ENCODE measurements at regions of chr1 and their contacts with region 1.

Region 1: DNA sequence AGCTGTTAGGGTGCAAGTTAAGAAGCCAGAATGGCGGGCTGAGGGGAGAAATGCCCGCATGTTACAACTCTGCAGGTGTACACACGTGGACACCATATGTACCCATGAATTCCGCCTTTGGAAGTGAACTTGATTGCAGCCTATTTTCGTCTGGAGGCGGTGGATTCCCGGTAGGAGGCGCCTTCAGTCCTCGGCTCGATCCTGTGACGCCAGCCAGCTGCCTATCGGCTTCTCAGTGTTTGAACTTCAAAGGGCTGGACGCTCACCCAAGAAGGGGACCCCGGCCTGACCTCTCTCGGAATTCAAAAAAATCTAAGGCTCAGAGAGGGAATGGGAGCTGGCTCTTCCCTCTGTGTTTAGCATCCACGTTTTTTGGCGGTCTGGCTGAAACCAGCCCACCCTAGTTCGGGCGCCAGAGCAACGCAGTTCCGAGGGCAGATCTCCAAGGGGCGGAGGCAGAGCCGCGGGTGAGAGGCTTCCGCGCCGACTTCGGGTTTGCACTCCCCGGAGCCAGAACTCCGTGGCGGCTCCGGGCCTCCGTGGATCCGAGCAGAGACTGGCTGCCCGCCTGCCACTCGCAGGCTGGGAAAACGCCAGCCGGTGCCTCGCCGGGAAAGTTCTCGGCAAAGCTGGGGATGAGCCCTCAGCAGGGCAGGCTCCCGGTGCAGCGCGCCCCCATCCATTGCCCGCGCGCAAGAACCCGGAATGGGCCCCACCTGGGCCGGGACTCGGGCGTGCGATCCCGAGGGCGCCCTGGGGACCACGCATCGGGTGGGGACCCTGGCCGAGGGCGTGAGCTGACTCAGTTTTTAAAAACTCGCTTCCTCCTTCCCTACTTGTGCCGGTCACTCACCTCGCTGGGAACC is 996 bp upstream of the TMEM51 start:
- H3K4me3 Mint-ChIP-seq: peak overlapping the region; percentile 96
- H3K27ac Mint-ChIP-seq: peak overlapping the region; percentile 94
- H3K4me1 Mint-ChIP-seq: peaks cover 68% of the 10 kb centered on the region
- H3K27me3 Mint-ChIP-seq: peaks cover 13% of the 10 kb centered on the region

Region 2: DNA sequence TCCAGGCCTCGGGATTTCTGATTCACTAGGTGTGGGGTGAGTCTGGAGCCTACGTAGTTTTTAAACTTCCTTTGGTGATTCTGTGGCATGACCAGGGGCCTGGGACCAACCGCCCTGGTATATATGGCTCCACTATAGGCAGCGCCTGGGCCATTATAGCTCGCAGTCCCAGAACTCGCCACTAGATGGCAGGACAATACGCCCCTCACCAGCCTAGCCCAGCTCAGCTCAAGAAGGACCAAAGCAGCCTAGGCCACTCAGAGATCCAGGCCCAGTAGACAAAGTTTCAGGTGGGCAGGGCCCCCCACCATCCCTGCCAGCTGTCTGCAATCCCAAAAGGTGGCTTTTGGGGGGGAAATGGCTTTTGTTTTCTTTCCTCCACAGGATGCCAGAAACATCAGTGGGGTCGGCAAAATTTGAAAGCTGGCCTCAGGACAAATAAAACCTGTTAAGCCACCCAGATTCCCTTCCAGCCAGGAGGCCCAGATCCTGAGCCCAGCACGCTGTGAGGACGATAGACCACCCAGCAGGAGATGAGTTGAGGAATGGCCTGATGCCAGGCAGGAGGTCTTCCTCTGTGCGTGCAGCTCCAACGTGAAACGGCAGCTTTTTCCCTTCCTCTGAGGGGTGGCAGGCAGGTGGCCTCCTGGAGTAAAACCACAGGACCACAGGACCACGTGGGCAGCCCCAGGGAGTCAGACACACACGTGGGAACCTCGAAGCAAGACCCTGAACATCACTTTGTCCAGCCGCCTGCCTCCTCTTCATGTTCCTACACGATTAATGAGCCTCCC is 23.8 kb before region 1 on chr1:
- intact Hi-C with region 1: loop called (anchors 2 kb)
- H3K4me3 Mint-ChIP-seq: no peak overlapping the region
- H3K27ac Mint-ChIP-seq: peak overlapping the region; percentile 26
- H3K4me1 Mint-ChIP-seq: peaks cover 15% of the 10 kb centered on the region
- H3K27me3 Mint-ChIP-seq: peaks cover 10% of the 10 kb centered on the region

Region 3: GRCh38 chr1:15168479-15168878 is 15.9 kb after region 1 on chr1:
- intact Hi-C with region 1: loop called (anchors 2 kb)
- H3K4me3 Mint-ChIP-seq: no peak overlapping the region
- H3K27ac Mint-ChIP-seq: peak overlapping the region; percentile 84
- H3K4me1 Mint-ChIP-seq: peaks cover 56% of the 10 kb centered on the region
- H3K27me3 Mint-ChIP-seq: no peaks in the 10 kb centered on the region

Region 4: DNA sequence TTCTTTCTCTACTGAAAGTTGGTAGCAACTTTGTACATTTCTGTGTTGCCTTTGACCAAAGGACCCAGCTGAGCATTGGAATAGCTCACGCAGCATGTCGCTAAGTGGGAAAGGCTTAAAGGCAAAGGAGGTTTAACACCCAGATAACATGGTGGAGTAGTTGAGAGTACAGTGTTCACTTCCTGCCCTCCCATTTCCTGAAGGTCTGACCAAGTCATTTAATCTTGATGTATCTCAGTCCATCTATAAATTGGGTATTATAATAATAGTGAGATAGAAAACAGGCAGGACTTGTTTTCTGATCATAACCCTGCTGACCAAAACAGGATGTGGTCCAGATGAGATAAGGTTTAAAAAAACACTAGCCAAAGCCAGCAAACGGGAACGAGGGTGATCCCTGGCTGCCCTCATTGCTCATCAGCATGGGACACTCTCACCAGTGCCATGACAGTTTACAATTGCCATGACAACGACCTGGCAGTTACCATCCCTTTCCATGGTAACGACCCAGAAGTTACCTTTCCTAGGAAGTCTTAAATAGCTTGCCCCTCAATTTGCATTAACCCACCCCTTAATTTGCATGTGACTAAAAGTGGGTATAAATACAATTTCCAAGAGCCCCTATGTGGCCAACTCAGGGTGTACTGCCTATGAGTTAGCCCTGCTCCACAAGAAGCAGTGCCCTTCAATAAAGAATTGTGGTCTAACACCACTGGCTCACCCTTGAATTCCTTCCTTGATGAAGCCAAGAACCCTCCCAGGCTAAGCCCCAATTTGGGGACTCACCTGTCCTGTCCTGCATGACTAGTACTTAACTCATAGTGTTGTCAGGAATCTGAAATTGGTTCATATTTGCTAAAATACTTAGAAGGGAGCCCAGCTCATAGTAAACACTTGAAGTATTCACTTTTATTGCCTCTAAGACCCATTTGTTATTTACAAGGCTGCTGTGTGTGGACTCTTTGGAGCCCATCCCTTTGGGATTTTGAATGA is 66.0 kb after region 1 on chr1:
- intact Hi-C with region 1: loop called (anchors 10 kb)
- H3K4me3 Mint-ChIP-seq: no peak overlapping the region
- H3K27ac Mint-ChIP-seq: no peak overlapping the region
- H3K4me1 Mint-ChIP-seq: peaks cover 89% of the 10 kb centered on the region
- H3K27me3 Mint-ChIP-seq: no peaks in the 10 kb centered on the region

Region 5: GRCh38 chr1:15272009-15272788 is 119.6 kb after region 1 on chr1:
- intact Hi-C with region 1: loop called (anchors 2 kb)
- H3K4me3 Mint-ChIP-seq: peak overlapping the region; percentile 32
- H3K27ac Mint-ChIP-seq: peak overlapping the region; percentile 22
- H3K4me1 Mint-ChIP-seq: peaks cover 43% of the 10 kb centered on the region
- H3K27me3 Mint-ChIP-seq: no peaks in the 10 kb centered on the region

Region 6: DNA sequence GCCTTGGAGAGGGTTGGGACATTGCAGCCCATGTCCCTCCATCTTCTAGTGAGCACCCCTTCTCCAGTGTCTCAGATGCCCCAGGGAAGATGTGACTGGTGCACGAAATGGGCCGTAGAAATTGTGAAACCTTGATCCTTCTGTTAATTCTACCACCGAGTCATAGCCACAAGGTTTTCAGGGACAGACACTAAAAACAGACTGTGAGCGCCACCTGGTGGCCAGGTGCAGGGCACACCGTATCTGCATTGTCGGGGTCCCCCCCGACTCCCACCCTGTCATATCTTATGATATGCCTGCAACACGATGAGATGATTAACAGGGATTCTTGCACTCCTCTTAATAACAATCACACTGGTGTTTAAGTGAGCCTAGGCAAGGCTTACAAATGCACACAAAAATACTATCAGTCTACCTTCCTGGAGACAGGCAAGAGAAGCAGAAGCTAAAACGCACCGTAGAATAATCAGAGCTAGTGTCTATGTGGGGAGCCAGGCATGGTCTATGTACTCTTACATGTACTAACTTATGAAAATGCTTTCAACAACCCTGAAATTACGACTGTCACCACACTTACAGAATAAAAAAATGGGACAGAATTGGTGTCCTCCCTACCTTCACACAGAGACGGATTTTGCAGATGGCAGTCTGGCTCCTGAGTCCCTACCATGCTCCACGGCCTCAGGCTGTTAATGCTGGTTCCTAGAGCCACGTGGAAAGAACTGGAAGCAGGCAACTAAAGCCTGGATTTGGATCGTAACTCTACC is 152.3 kb after region 1 on chr1:
- intact Hi-C with region 1: loop called (anchors 1 kb)
- H3K4me3 Mint-ChIP-seq: no peak overlapping the region
- H3K27ac Mint-ChIP-seq: no peak overlapping the region
- H3K4me1 Mint-ChIP-seq: peaks cover 16% of the 10 kb centered on the region
- H3K27me3 Mint-ChIP-seq: peaks cover 13% of the 10 kb centered on the region

Region 7: DNA sequence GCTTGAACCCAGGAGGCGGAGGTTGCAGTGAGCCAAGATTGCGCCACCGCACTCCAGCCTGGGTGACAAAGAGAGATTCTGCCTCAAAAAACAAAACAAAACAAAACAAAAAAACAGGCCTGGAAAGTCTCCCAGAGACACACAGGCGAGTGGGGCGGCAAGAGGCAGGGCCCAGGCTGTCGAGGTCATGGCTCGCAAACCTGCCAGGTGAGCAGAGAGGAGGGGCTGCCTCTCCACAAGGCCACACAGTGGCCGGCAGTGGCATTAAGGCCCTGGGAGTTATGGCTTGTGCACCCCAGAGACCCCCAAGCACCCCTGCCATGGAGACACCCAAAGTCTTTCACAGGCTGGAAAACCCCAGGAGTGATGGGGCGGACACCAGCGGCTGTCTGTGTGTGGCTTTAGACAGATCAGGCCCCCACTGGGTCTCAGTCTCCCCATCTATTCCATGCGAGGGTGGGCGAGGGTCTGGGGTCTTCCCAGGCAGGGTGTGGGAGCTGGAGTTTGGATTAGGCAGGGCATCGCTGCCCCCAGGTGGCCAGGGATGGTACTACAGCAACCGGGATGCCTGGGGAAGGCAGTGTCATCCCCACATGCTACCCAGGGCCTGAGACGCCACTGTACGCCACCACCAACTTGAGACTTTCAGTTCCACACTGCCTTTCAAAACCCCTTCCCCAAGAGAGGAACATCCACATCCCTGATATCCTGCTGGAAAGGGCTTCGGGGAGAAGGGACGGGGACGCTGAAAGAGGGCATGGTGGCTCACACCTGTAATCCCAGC is 278.4 kb after region 1 on chr1:
- intact Hi-C with region 1: loop called (anchors 5 kb)
- H3K4me3 Mint-ChIP-seq: no peak overlapping the region
- H3K27ac Mint-ChIP-seq: peak overlapping the region; percentile 74
- H3K4me1 Mint-ChIP-seq: peaks cover 88% of the 10 kb centered on the region
- H3K27me3 Mint-ChIP-seq: no peaks in the 10 kb centered on the region